WTC11 (cell line): ENCODE measurements at regions of chr5 and their contacts with region 1.

Region 1: GRCh38 chr5:158695595-158696330 is 404.0 kb downstream of the EBF1 start:
- DNase-seq: peak; percentile 88
- ATAC-seq: peak; percentile 91
- H3K4me3 Mint-ChIP-seq: no peak overlapping the region
- H3K27ac Mint-ChIP-seq: no peak overlapping the region
- H3K4me1 Mint-ChIP-seq: peaks cover 52% of the 10 kb centered on the region
- H3K27me3 Mint-ChIP-seq: no peaks in the 10 kb centered on the region; the same call in 1 of the 2 replicates
- CTCF ChIP-seq: peak; percentile 96

Region 2: DNA sequence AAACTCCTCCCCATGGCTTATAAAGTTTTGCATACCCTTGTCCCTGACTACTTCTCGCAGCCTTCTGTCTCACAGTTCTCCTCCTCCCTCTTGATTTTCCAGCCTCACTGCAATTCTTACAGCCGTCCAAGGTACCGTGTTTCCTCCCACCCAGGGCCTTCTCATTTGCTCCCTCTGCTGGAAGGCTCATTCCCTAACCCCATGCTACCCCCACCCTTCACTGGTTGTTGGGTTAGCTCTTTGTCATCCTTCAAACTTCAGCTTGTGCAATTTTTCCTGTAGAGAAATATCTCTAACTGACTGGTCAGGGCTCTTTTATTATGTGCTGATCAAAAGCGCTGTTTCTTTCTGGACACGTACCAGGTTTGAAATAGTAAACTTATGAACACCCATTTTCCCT is 74.7 kb after region 1 on chr5:
- CTCF ChIA-PET with region 1: interaction called, 15 read pairs
- POLR2A ChIA-PET with region 1: no interaction called
- DNase-seq: peak; percentile 45
- ATAC-seq: peak; percentile 97
- H3K4me3 Mint-ChIP-seq: no peak overlapping the region
- H3K27ac Mint-ChIP-seq: no peak overlapping the region
- H3K4me1 Mint-ChIP-seq: peaks cover 16% of the 10 kb centered on the region
- H3K27me3 Mint-ChIP-seq: no peaks in the 10 kb centered on the region
- CTCF ChIP-seq: peak; percentile 35; the same call in 1 of the 2 replicates